Right ventricle myocardium inferior (tissue), 1 donor: ENCODE measurements at regions of chr2 and their contacts with region 1.

Region 1: DNA sequence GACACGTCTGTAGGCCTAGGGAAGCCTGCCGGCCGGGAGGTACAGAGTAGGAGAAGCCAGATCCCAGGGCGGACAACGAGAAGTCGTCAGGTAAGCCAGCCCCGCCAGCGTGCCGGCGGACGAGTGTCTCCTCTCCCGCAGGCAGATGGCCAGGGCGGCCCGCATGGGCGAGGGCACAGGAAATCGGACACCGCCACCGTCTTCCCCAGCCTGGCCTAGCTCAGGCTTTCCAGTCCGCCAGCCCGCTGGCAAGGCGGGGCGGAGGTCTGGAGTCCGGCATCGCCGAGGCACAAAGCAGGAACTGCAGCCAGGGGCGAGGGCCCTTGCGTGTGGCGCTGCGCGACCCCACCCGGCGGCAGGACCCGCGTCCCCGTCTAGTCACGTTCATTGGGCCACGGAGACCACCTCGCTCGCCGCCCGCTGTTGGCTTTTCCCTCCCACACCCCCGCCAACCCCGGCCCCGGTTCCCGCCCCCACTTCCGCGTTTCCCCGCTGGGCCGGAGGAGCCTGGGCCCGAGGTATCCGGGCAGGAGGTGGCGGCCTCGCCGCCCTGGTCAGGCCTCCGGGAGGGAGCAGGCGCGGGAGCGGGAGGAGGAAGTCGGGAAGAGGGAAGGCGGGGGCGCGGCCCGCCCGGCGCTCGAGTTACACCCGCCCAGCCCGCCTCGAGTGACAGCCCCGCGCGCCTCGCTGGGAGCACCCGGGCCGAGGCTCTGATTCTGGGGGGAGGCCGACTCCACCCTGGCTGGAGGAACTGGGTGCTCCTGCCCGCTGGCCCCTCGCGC is at the start of gene GPD2:
- DNase-seq: peak; percentile 97
- ATAC-seq: peak; percentile 99
- total RNA-seq, gene GPD2: 18.7 TPM

Region 2: DNA sequence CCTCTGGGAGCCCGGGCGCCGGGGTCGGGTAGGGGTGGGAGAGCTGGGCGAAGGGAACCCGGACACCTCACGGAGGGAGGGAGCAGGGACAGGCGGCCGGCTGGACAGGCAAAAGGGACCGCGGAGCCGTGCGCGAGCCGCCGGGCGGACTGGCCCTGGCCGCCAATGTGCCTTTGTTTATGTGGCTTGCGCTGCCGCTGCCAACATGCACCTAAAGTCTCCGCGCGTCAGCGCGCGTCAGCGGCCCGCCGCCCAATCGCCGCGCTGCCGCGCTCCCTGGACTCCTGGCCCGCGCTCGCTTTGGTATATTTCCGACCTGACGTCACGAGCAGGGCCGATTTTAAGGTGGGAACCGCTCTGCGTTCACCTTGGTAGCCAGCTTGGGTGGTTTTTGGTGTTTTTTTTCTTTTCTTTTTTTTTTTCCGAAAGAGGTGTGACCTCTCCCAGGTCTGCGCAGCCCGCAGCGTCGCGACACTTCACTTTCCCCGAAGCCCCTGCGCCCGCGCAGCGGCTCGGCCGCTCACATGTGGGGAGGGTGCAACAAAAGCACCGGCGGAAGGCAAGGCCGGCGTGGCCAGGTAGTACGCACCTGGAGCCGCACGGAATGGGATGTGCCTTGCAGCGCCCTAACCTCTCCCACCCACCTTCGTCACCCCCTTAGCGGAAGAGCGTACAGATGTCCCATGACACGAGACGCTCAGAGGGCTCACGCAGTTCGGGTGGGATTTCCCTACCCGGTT is 103.2 kb before region 1 on chr2 and contains the start of gene NR4A2:
- intact Hi-C with region 1: loop called (anchors 2 kb)
- DNase-seq: peak; percentile 94
- ATAC-seq: peak; percentile 77
- total RNA-seq, gene NR4A2: 1.6 TPM

Region 3: GRCh38 chr2:156341452-156342253 is 94.3 kb before region 1 on chr2:
- intact Hi-C with region 1: loop called (anchors 2 kb)
- DNase-seq: peak; percentile 94
- ATAC-seq: peak; percentile 89

Region 4: GRCh38 chr2:156400706-156401678 is 34.9 kb before region 1 on chr2:
- intact Hi-C with region 1: loop called (anchors 1 kb)
- DNase-seq: peak; percentile 72
- ATAC-seq: peak; percentile 92

Region 5: GRCh38 chr2:156472686-156473085 is 36.8 kb after region 1 on chr2:
- intact Hi-C with region 1: loop called (anchors 5 kb)
- DNase-seq: no peak
- ATAC-seq: no peak

Region 6: DNA sequence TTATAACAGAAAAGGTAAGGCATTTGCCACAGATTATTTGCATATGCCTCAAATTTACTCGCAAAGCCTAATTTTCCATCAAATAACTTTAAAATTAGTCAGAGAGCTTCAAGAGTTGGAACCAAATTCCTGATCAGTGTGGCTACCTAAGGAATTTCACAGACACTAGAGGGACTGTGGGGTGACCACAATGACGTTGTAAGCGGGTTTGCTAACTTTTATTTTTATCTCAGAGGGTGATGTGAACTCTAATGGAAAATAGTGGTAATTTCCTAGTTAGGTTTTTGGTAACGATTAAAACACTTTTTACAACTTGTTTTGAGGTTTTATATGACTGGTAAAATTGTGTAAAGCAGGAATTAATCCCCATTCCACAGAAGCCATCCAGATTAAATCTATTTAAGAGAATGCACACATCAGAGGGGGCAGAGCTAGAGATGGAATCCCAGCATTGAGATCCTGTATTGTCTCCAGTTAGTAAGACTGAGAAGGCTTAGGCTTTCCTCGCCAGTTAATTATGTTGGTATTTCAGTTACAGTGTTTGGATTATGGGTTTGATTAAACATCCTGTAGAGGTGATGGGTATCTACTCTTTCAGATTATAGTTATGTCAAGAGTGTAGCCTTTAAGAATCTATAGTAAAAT is 129.3 kb after region 1 on chr2:
- intact Hi-C with region 1: loop called (anchors 10 kb)
- DNase-seq: no peak
- ATAC-seq: no peak

Region 7: DNA sequence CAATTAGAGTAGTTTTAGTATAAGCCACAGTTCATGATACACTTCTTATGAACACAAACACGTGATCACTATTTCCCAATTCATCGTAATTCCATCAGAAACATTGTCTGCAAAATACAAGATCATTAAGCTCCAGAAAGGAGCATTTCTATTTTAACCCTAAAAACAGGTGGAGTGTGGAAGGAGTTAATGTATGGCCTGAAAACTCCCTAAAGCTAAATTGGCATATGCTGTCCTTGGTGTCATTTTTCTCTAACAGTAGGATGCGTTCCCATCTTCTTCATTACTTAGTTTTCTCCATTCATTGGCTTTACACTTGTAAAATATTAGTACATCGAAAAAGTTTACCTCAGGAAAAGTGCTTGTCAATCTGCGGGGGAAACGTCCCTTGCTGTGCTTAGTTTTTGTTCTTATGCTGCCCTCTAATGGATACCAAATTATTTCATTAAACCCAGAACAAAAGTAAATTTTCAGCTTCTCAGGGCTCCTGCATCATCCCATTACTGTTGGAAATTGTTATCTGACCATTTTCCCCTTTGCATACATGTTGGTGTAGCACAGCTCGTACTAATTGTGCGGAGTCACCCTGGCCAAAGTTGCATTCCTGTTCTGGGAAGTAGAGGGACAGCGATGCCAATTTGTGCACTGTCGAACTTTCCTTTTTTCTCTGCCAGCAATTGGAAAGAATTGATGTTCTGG is 153.6 kb after region 1 on chr2:
- intact Hi-C with region 1: loop called (anchors 5 kb)
- DNase-seq: no peak
- ATAC-seq: peak; percentile 37